H1 (cell line): ENCODE measurements at regions of chr16 and their contacts with region 1.

Region 1: DNA sequence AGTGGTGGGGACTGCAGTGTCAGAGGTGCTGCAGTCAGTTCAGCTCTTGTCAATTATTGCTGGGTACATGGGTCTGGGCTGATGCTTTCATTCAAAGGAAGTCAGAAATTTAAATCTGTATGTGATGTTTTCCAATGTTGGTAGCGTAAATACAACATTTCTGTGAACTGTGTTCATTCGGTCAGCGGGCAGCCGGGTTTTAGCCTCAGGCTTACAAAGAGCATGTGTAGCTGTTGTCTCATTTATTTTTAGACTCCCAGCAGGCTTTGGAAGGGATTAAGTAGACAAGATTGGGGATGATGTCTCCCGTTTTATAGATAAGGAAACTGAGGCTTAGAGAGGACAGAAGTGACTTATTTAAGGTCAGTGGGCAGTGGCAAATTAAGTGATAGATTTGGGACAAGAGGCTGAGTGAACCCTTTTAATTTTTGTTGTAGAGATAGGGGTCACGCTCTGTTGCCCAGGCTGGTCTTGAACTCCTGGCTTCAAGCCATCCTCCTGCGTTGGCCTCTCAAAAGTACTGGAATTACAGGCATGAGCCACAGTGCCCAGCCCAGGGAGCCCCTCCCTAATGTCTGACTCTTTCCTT is 8.1 kb downstream of the AQP8 start:
- DNase-seq: no peak
- H3K4me3 ChIP-seq: no peak overlapping the region
- H3K27ac ChIP-seq: no peak overlapping the region
- H3K4me1 ChIP-seq: peaks cover 0 to 3% (median 2%) of the 10 kb centered on the region in 4 experiments; a peak in 3 of 7 replicates
- H3K27me3 ChIP-seq: no peaks in the 10 kb centered on the region
- CTCF ChIP-seq: no peak
- EP300 ChIP-seq: no peak
- POLR2A ChIP-seq: no peak
- RAD21 ChIP-seq: no peak

Region 2: GRCh38 chr16:25187506-25187825 is 37.4 kb before region 1 on chr16:
- CTCF ChIA-PET with region 1: interaction called, 13 read pairs
- POLR2A ChIA-PET with region 1: no interaction called
- DNase-seq: no peak
- H3K4me3 ChIP-seq: no peak overlapping the region
- H3K27ac ChIP-seq: no peak overlapping the region
- H3K4me1 ChIP-seq: no peaks in the 10 kb centered on the region
- H3K27me3 ChIP-seq: no peaks in the 10 kb centered on the region
- CTCF ChIP-seq: no peak
- EP300 ChIP-seq: no peak
- POLR2A ChIP-seq: no peak
- RAD21 ChIP-seq: no peak

Region 3: DNA sequence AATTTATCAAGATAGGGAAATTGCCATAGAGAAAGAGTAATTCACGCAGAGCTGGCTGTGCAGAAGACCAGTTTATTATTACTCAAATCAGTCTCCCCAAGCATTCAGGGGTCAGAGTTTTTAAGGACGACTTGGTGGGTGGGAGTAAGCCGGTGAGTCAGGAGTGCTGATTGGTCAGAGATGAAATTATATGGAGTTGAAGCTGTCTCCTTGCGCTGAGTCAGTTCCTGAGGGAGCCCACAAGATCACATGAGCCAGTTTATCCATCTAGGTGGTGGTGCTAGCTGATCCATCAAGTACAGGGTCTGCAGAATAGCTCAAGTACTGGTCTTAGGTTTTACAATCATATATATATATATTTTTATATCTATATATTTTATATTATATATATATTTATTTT is 14.1 kb before region 1 on chr16:
- CTCF ChIA-PET with region 1: interaction called, 11 read pairs
- POLR2A ChIA-PET with region 1: no interaction called
- DNase-seq: no peak
- H3K4me3 ChIP-seq: no peak overlapping the region
- H3K27ac ChIP-seq: no peak overlapping the region
- H3K4me1 ChIP-seq: no peaks in the 10 kb centered on the region
- H3K27me3 ChIP-seq: no peaks in the 10 kb centered on the region
- CTCF ChIP-seq: no peak
- EP300 ChIP-seq: no peak
- POLR2A ChIP-seq: no peak
- RAD21 ChIP-seq: no peak

Region 4: DNA sequence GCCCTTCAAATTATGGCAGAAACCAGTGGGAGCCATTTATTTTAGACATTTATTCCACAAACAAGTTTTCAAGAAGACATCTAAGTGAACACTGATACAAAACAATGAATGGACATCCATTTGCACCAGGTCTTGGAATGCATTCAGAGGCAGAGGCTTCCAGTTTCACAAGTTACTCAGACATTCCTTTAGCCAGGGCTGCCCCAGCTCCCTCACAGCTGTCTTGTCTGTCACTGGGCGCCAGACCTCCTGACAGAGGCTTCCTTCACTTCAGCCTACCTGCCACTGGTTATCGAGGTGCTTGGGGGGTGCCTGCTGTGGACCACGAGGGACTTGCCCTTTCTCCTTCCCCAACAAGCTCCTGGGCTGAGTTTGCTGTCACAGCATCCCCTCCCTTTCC is 11.2 kb after region 1 on chr16:
- CTCF ChIA-PET with region 1: interaction called, 32 read pairs
- POLR2A ChIA-PET with region 1: interaction called, 3 read pairs
- DNase-seq: no peak
- H3K4me3 ChIP-seq: no peak overlapping the region
- H3K27ac ChIP-seq: no peak overlapping the region
- H3K4me1 ChIP-seq: no peaks in the 10 kb centered on the region
- H3K27me3 ChIP-seq: no peaks in the 10 kb centered on the region
- CTCF ChIP-seq: no peak
- EP300 ChIP-seq: no peak
- POLR2A ChIP-seq: no peak
- RAD21 ChIP-seq: no peak

Region 5: DNA sequence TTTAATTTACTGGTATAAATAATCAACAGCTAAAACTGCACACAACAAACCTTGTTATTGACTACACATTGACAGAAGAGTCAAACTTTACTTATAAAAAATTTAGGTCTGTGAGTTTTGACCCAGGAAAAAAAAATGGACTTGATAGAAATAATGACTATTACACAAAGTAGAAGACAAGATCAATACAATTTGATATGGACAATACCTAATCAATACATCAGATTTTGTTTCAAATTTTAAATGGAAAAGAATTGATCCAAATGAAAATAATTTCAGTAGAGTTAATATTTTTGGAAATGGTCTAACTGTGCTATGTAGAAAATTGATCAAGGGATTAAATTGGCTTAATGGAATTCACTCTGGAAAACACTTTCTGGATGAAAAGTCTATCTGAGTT is 124.5 kb after region 1 on chr16:
- CTCF ChIA-PET with region 1: no interaction called
- POLR2A ChIA-PET with region 1: no interaction called
- DNase-seq: no peak
- H3K4me3 ChIP-seq: no peak overlapping the region
- H3K27ac ChIP-seq: no peak overlapping the region
- H3K4me1 ChIP-seq: no peaks in the 10 kb centered on the region
- H3K27me3 ChIP-seq: no peaks in the 10 kb centered on the region
- CTCF ChIP-seq: no peak
- EP300 ChIP-seq: no peak
- POLR2A ChIP-seq: no peak
- RAD21 ChIP-seq: no peak